ENCODE measurements at regions of chr18 and their contacts with region 1.

Region 1: GRCh38 chr18:36828630-36829361 is at the starts of genes KIAA1328 and TPGS2:
- DNase-seq: peak; percentile 77 to 90 (median 87)
- ATAC-seq: peak; percentile 96
- H3K4me3 ChIP-seq: peak within 1 kb of the TSS; percentile 79
- H3K4me3 Mint-ChIP-seq: peak within 1 kb of the TSS; percentile 73 to 98 (median 92)
- H3K27ac ChIP-seq: peak within 1 kb of the TSS; percentile 75
- H3K27ac Mint-ChIP-seq: peak within 1 kb of the TSS; percentile 57 to 98 (median 90)
- H3K4me1 ChIP-seq: peaks cover 15 to 18% of the 10 kb centered on the region in 2 donors
- H3K4me1 Mint-ChIP-seq: peaks cover 27 to 60% (median 47%) of the 10 kb centered on the region in 7 donors
- H3K27me3 ChIP-seq: no peaks in the 10 kb centered on the region
- H3K27me3 Mint-ChIP-seq: no peaks in the 10 kb centered on the region
- total RNA-seq, gene KIAA1328: 8.1 to 17.6 (median 16.0) TPM
- total RNA-seq, gene TPGS2: 16.9 to 92.8 (median 53.5) TPM

Region 2: DNA sequence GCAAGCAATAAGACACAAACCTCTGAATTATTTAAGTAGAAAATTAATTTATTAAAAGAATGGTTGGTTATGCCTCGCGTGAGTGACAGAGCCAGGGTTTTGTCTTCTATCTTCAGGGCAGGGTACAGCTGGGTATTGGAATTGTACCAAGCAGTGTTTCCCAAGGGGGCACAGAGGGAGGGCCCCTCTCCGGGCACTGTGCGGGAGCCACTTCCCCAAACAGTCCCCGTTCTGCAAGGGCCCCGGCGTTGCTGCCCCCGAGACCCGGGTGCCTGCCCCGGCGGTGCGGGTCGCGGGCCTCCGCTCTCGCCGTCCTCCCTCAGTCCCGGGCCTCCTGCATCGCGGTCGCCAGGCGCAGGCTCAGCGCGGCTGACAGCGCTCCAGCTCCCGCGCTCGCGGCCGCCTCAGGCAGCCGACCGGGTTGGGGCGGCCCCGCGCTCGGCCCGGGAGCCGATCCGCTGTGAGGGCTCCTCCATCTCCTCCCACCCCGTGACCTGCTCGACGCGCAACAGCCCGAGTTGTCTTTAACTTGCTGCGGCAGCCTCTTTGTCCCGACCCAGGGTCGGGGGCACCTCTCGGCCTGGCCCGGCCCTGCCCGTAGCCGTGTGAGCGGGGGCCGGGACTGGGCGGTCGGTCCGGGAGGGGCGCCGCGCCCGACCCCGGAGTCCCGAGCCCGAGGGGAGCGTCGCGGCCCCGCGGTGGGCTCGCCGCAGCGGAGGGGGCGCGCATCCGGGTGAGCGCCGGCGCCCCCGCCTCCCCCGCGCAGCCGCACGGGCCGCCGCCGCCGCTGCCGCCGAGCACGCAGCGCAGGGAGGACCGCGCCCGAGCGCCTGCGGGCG is 1247.9 kb before region 1 on chr18:
- CTCF ChIA-PET with region 1: no interaction called
- POLR2A ChIA-PET with region 1: no interaction called
- intact Hi-C with region 1: loop called in 1 of 2 experiments (anchors 2 kb)
- DNase-seq: peak; percentile 54 to 70 (median 63)
- ATAC-seq: peak; percentile 84
- H3K4me3 ChIP-seq: peak overlapping the region; percentile 61
- H3K4me3 Mint-ChIP-seq: peak overlapping the region; percentile 60 to 80 (median 72)
- H3K27ac ChIP-seq: peak overlapping the region; percentile 77
- H3K27ac Mint-ChIP-seq: peak overlapping the region in 5 of 9 donors; percentile 37 to 80 (median 63)
- H3K4me1 ChIP-seq: peaks cover 11% of the 10 kb centered on the region in 2 donors
- H3K4me1 Mint-ChIP-seq: peaks cover 13 to 39% (median 28%) of the 10 kb centered on the region in 7 donors
- H3K27me3 ChIP-seq: no peaks in the 10 kb centered on the region
- H3K27me3 Mint-ChIP-seq: peaks cover 0 to 18% (median 7%) of the 10 kb centered on the region in 5 donors

Region 3: GRCh38 chr18:36818652-36819051 is 10.1 kb before region 1 on chr18:
- CTCF ChIA-PET with region 1: no interaction called
- POLR2A ChIA-PET with region 1: no interaction called
- intact Hi-C with region 1: loop called in 1 of 2 experiments (anchors 1 kb)
- DNase-seq: no peak
- ATAC-seq: no peak
- H3K4me3 ChIP-seq: no peak overlapping the region
- H3K4me3 Mint-ChIP-seq: no peak overlapping the region
- H3K27ac ChIP-seq: no peak overlapping the region
- H3K27ac Mint-ChIP-seq: no peak overlapping the region
- H3K4me1 ChIP-seq: no peaks in the 10 kb centered on the region
- H3K4me1 Mint-ChIP-seq: peaks cover 0 to 14% (median 4%) of the 10 kb centered on the region in 7 donors
- H3K27me3 ChIP-seq: no peaks in the 10 kb centered on the region
- H3K27me3 Mint-ChIP-seq: no peaks in the 10 kb centered on the region

Region 4: DNA sequence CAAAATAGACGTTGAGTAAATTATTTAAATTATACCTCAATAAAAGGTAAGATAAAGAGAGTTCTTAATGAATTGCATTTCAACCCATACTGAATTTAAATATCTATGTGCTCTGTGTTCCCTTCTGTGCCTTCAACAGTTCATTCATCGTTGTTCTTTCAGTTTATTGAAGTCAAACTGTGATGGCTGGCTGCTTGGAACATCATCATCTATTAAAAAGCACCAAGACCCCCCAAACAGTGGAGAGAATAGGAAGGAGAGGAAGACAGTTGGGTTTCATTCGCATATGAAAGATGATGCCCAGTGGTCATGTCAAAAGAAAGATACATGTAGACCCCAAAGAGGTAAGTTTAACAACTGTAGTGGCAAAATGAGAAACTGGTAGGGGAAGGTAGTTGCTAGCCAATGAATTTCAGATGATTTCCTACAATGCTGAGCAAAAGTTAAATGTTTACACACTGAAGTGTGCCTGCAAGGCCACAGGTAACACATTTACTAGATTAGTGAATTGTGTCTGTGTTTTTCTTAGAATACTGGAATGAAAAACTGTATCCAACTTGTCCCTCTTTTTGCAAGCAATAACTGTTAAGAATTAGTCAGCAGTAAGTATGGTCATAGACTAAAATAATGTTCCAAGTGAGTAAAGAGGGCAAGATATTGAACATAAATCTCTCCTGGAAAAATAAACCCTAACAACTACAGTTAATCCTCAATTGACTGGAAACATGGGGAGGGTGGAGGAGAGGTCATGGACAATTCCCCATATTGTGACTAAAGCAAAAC is 331.4 kb after region 1 on chr18:
- CTCF ChIA-PET with region 1: no interaction called
- POLR2A ChIA-PET with region 1: no interaction called
- intact Hi-C with region 1: no loop called
- DNase-seq: no peak
- ATAC-seq: no peak
- H3K4me3 ChIP-seq: no peak overlapping the region
- H3K4me3 Mint-ChIP-seq: no peak overlapping the region
- H3K27ac ChIP-seq: no peak overlapping the region
- H3K27ac Mint-ChIP-seq: no peak overlapping the region
- H3K4me1 ChIP-seq: no peaks in the 10 kb centered on the region
- H3K4me1 Mint-ChIP-seq: no peaks in the 10 kb centered on the region
- H3K27me3 ChIP-seq: no peaks in the 10 kb centered on the region
- H3K27me3 Mint-ChIP-seq: no peaks in the 10 kb centered on the region

Measured in naive thymus-derived CD4-positive, alpha-beta T cell (primary cell).